PC-9 (cell line): ENCODE measurements at regions of chr13 and their contacts with region 1.

Region 1: GRCh38 chr13:48994706-48995105 is 19.0 kb downstream of the FNDC3A start:
- DNase-seq: no peak
- H3K4me3 ChIP-seq: no peak overlapping the region
- H3K27ac ChIP-seq: no peak overlapping the region
- H3K4me1 ChIP-seq: no peaks in the 10 kb centered on the region
- H3K27me3 ChIP-seq: no peaks in the 10 kb centered on the region
- CTCF ChIP-seq: no peak

Region 2: GRCh38 chr13:48686811-48687210 is 307.9 kb before region 1 on chr13:
- CTCF ChIA-PET with region 1: no interaction called
- POLR2A ChIA-PET with region 1: no interaction called
- intact Hi-C with region 1: no loop called
- DNase-seq: no peak
- H3K4me3 ChIP-seq: no peak overlapping the region
- H3K27ac ChIP-seq: no peak overlapping the region
- H3K4me1 ChIP-seq: no peaks in the 10 kb centered on the region
- H3K27me3 ChIP-seq: 0 out of 2 replicates have a peak, but pooled peaks cover 6% of the 10 kb centered on the region
- CTCF ChIP-seq: no peak

Region 3: GRCh38 chr13:49190901-49191300 is 196.2 kb after region 1 on chr13:
- CTCF ChIA-PET with region 1: no interaction called
- POLR2A ChIA-PET with region 1: interaction called, 14 read pairs
- intact Hi-C with region 1: no loop called
- DNase-seq: no peak
- H3K4me3 ChIP-seq: no peak overlapping the region
- H3K27ac ChIP-seq: no peak overlapping the region
- H3K4me1 ChIP-seq: no peaks in the 10 kb centered on the region
- H3K27me3 ChIP-seq: no peaks in the 10 kb centered on the region
- CTCF ChIP-seq: no peak